RWPE1 (cell line): ENCODE measurements at regions of chr5 and their contacts with region 1.

Region 1: GRCh38 chr5:122156724-122157325 is 27.5 kb downstream of the ZNF474 start:
- DNase-seq: peak; percentile 57
- H3K27ac ChIP-seq: no peak overlapping the region
- CTCF ChIP-seq: peak; percentile 72

Region 2: GRCh38 chr5:121867401-121867800 is 289.4 kb before region 1 on chr5:
- CTCF ChIA-PET with region 1: no interaction called
- POLR2A ChIA-PET with region 1: no interaction called
- DNase-seq: no peak
- H3K27ac ChIP-seq: no peak overlapping the region
- CTCF ChIP-seq: no peak

Region 3: DNA sequence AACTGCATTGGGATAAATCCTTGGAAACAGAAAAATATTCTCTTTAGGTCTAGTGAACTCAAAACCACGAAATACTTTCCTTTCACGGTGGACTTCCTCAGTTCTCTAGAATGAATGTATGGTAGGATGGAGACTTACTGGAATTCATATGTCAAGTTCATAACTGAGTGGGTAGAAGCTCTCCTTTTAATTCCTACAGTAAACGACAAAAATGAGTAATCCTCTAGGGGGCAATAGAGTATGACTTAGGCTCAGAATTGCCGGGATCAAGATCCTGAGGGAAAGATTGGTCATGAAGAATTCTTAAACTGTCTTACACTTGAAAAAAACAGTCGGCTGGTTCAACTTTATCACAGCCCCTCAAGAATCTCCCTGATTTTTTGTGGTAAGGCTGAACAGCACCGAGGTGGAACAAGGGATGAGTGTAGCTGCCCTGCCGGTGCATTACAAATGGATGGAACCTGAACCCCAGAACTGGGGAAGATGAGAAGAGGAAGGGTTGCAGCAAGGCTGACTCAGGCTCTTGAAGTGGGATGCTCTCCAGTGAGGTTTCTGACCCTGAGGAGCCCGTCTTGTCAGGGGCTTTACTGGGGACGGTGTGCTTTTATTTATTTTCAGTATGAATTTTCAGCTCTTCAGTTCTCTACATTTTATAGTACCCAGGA is 64.8 kb before region 1 on chr5:
- CTCF ChIA-PET with region 1: interaction called, 11 read pairs
- POLR2A ChIA-PET with region 1: no interaction called
- DNase-seq: peak; percentile 42
- H3K27ac ChIP-seq: no peak overlapping the region
- CTCF ChIP-seq: peak; percentile 56

Region 4: GRCh38 chr5:122129306-122129705 is 27.5 kb before region 1 on chr5 and contains the start of gene ZNF474:
- CTCF ChIA-PET with region 1: interaction called, 11 read pairs
- POLR2A ChIA-PET with region 1: no interaction called
- DNase-seq: peak; percentile 86
- H3K27ac ChIP-seq: peak within 1 kb of the TSS; percentile 58
- CTCF ChIP-seq: no peak

Region 5: DNA sequence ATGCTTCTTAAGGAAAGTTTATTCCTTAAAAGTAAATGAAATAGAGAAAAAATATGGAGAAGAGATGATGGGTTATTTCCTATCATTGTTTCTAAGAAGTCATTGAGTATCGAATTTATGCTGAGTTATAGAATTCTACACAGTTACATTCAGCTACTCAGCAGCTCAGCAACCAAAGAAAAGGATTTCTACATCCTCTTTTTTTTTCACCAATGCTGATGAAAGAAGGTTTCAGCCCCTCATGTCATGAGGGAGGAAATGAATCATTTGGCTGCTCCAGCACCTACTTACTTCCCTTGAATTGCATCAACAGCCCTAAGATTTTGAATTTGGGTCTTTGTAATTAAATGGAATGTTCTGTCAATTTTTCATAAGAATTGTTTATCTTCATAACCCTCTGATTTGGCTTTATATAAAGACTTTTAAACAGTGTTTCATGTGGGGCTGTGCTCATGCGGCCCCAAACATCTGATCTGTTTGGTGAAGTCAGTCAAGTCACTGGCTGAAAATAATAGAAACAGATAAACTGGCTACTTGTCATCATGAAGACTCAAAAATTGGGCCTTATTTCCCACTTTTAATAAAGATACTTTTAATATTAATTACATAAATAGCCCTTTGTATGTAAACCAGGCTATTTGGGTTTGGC is 599.6 kb after region 1 on chr5:
- CTCF ChIA-PET with region 1: no interaction called
- POLR2A ChIA-PET with region 1: no interaction called
- DNase-seq: peak; percentile 66
- H3K27ac ChIP-seq: no peak overlapping the region
- CTCF ChIP-seq: no peak